SK-N-SH (cell line): ENCODE measurements at regions of chrX and their contacts with region 1.

Region 1: GRCh38 chrX:51336584-51336983 is 4.0 kb downstream of the NUDT10 start:
- DNase-seq: peak; percentile 63
- H3K4me3 ChIP-seq: no peak overlapping the region
- H3K27ac ChIP-seq: no peak overlapping the region
- H3K4me1 ChIP-seq: no peaks in the 10 kb centered on the region; a peak in 1 of 4 replicates
- H3K27me3 ChIP-seq: peaks cover 14% of the 10 kb centered on the region
- CTCF ChIP-seq: peak; percentile 67
- EP300 ChIP-seq: no peak
- RAD21 ChIP-seq: peak; percentile 74

Region 2: GRCh38 chrX:51215259-51215658 is 121.3 kb before region 1 on chrX:
- CTCF ChIA-PET with region 1: no interaction called
- POLR2A ChIA-PET with region 1: no interaction called
- DNase-seq: no peak
- H3K4me3 ChIP-seq: no peak overlapping the region
- H3K27ac ChIP-seq: no peak overlapping the region
- H3K4me1 ChIP-seq: no peaks in the 10 kb centered on the region
- H3K27me3 ChIP-seq: no peaks in the 10 kb centered on the region
- CTCF ChIP-seq: peak; percentile 20; the same call in 1 of the 2 replicates
- EP300 ChIP-seq: no peak
- RAD21 ChIP-seq: peak; percentile 29; the same call in 1 of the 2 replicates

Region 3: DNA sequence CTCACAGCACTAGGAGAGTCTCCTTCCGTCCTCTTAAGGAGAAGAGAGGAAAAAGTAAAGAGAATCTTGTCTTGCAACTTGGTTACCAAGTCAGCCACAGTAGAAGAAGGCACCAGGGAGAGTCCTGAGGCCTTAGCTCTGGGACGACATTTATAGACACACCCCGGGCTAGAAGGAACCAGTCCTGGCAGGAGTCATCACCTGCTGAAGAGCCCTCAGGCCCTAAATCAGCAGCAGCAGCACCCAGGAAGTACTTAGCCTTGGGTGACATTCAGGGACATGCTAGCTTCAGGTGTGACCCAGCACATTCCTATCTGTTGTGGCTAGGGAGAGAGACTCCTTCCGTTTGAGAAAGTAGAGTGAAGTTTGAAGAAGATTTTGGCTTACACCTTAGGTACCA is 37.8 kb before region 1 on chrX:
- CTCF ChIA-PET with region 1: no interaction called
- POLR2A ChIA-PET with region 1: no interaction called
- DNase-seq: no peak
- H3K4me3 ChIP-seq: no peak overlapping the region
- H3K27ac ChIP-seq: no peak overlapping the region
- H3K4me1 ChIP-seq: no peaks in the 10 kb centered on the region
- H3K27me3 ChIP-seq: no peaks in the 10 kb centered on the region; the same call in 1 of the 2 replicates
- CTCF ChIP-seq: no peak
- EP300 ChIP-seq: no peak
- RAD21 ChIP-seq: no peak

Region 4: GRCh38 chrX:51406688-51407461 is 70.3 kb after region 1 on chrX:
- CTCF ChIA-PET with region 1: interaction called, 12 read pairs
- POLR2A ChIA-PET with region 1: no interaction called
- DNase-seq: no peak
- H3K4me3 ChIP-seq: no peak overlapping the region
- H3K27ac ChIP-seq: no peak overlapping the region
- H3K4me1 ChIP-seq: no peaks in the 10 kb centered on the region
- H3K27me3 ChIP-seq: peaks cover 10% of the 10 kb centered on the region; the same call in 1 of the 2 replicates
- CTCF ChIP-seq: no peak
- EP300 ChIP-seq: no peak
- RAD21 ChIP-seq: no peak